ENCODE measurements at regions of chr1 and their contacts with region 1.

Region 1: GRCh38 chr1:44048816-44049215 is 17.6 kb upstream of the SLC6A9 start:
- DNase-seq: no peak
- H3K4me3 ChIP-seq: no peak overlapping the region
- H3K27ac ChIP-seq: no peak overlapping the region
- H3K4me1 ChIP-seq: peaks cover 4% of the 10 kb centered on the region
- H3K27me3 ChIP-seq: no peaks in the 10 kb centered on the region
- CTCF ChIP-seq: no peak

Region 2: DNA sequence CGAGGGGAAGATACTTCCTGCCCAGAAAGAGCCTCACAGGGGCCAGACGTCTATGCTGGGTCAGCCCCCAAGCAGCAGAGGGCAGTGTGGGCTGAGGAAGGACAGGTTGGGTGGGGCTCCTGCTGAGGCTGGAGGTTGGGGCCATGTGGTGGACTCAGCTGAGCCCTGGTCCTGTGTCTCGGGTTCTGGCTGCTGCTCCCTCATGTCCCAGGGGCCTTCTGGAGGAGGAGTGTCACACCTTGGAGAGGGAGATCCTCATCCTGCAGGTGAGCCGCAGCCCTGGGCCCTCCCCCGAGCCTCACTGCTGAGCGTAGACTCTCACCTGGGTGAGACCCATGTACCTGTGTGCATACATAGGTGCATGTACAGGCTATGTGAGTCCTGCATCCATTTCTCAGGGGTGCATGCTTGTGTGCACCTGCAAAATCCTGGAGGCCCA is 53.9 kb before region 1 on chr1:
- CTCF ChIA-PET with region 1: interaction called, 13 read pairs
- POLR2A ChIA-PET with region 1: no interaction called
- intact Hi-C with region 1: no loop called
- DNase-seq: no peak
- H3K4me3 ChIP-seq: no peak overlapping the region
- H3K27ac ChIP-seq: no peak overlapping the region
- H3K4me1 ChIP-seq: peaks cover 19% of the 10 kb centered on the region
- H3K27me3 ChIP-seq: no peaks in the 10 kb centered on the region
- CTCF ChIP-seq: no peak

Region 3: GRCh38 chr1:44002606-44003157 is 46.1 kb before region 1 on chr1:
- CTCF ChIA-PET with region 1: interaction called, 19 read pairs
- POLR2A ChIA-PET with region 1: no interaction called
- intact Hi-C with region 1: no loop called
- DNase-seq: no peak
- H3K4me3 ChIP-seq: no peak overlapping the region
- H3K27ac ChIP-seq: no peak overlapping the region
- H3K4me1 ChIP-seq: no peaks in the 10 kb centered on the region
- H3K27me3 ChIP-seq: no peaks in the 10 kb centered on the region
- CTCF ChIP-seq: peak; percentile 43

Region 4: DNA sequence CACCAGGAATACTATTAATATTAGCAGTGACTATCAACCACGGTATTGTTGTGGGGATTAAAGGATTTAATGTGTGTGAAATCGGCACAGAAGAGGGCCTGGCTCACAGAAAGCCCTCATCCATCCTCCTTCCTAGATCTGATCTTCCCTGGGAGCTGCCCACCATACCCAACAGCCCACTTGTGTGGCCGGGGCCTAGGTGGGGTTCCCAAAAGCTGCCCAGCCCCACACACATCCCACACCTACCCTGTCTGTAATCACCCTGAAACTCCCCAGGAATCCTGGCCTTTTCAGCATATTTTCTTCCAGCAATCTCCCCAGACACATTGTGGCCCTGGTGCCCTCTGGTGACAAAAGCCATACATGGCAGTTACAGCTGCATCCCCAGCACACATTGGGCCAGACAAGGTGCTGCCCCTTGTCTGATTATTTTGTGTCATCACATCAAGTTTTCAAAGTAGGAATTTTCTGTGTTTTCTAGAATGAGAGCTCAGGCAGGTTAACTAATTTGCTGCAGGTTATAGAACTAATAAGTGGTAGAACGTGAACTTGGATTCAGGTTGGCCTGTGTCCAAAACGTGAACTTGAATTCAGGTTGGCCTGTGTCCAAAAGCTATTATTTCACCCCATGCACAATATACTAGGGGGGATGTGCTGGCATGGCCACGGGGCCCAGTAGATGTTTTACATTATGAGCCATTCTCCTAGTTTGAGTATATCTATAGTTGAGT is 12.2 kb before region 1 on chr1:
- CTCF ChIA-PET with region 1: interaction called, 11 read pairs
- POLR2A ChIA-PET with region 1: no interaction called
- intact Hi-C with region 1: no loop called
- DNase-seq: peak; percentile 87
- H3K4me3 ChIP-seq: no peak overlapping the region
- H3K27ac ChIP-seq: peak overlapping the region; percentile 28
- H3K4me1 ChIP-seq: peaks cover 26% of the 10 kb centered on the region
- H3K27me3 ChIP-seq: no peaks in the 10 kb centered on the region
- CTCF ChIP-seq: peak; percentile 93